ENCODE measurements at regions of chr19 and their contacts with region 1.

Region 1: GRCh38 chr19:7799640-7800355 is 30.2 kb upstream of the EVI5L start:
- DNase-seq: peak; percentile 61 to 65
- H3K4me3 ChIP-seq: peak overlapping the region; percentile 51
- H3K27ac ChIP-seq: no peak overlapping the region
- H3K4me1 ChIP-seq: peaks cover 6% of the 10 kb centered on the region; the same call in 1 of the 2 replicates
- H3K27me3 ChIP-seq: no peaks in the 10 kb centered on the region
- CTCF ChIP-seq: peak; percentile 87

Region 2: GRCh38 chr19:7373862-7374261 is 425.9 kb before region 1 on chr19:
- CTCF ChIA-PET with region 1: no interaction called
- POLR2A ChIA-PET with region 1: interaction called, 14 read pairs
- intact Hi-C with region 1: no loop called
- DNase-seq: peak in 1 of 2 experiments; percentile 58
- H3K4me3 ChIP-seq: no peak overlapping the region
- H3K27ac ChIP-seq: no peak overlapping the region
- H3K4me1 ChIP-seq: peaks cover 28% of the 10 kb centered on the region
- H3K27me3 ChIP-seq: no peaks in the 10 kb centered on the region
- CTCF ChIP-seq: no peak

Region 3: GRCh38 chr19:7460562-7460966 is 339.2 kb before region 1 on chr19:
- CTCF ChIA-PET with region 1: no interaction called
- POLR2A ChIA-PET with region 1: no interaction called
- intact Hi-C with region 1: no loop called
- DNase-seq: peak; percentile 92 to 99
- H3K4me3 ChIP-seq: peak overlapping the region; percentile 32; the same call in 1 of the 2 replicates
- H3K27ac ChIP-seq: peak overlapping the region; percentile 98
- H3K4me1 ChIP-seq: peaks cover 36% of the 10 kb centered on the region
- H3K27me3 ChIP-seq: no peaks in the 10 kb centered on the region
- CTCF ChIP-seq: no peak

Region 4: DNA sequence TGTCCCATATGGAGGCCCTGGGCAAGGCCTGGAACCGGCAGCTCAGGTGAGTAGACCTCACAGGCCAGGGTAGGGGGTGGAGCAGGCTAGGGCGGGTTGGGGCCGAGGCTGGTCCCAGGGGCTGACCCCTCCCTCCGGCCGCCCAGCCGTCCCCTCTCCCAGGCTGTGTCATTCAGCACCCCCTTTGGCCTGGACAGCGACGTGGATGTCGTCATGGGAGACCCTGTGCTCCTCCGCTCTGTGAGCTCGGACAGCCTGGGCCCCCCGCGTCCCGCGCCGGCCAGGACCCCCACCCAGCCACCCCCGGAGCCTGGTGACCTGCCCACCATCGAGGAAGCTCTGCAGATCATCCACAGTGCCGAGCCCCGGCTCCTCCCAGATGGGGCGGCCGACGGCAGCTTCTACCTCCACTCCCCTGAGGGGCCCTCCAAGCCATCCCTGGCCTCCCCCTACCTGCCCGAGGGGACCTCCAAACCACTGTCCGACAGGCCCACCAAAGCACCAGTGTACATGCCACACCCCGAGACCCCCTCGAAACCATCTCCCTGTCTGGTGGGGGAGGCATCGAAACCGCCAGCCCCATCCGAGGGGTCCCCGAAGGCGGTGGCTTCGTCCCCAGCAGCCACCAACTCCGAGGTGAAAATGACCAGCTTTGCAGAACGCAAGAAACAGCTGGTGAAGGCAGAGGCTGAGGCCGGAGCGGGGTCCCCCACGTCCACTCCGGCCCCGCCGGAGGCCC is 188.1 kb before region 1 on chr19:
- CTCF ChIA-PET with region 1: no interaction called
- POLR2A ChIA-PET with region 1: no interaction called
- intact Hi-C with region 1: no loop called
- DNase-seq: no peak
- H3K4me3 ChIP-seq: no peak overlapping the region
- H3K27ac ChIP-seq: no peak overlapping the region
- H3K4me1 ChIP-seq: no peaks in the 10 kb centered on the region
- H3K27me3 ChIP-seq: no peaks in the 10 kb centered on the region
- CTCF ChIP-seq: no peak

Region 5: DNA sequence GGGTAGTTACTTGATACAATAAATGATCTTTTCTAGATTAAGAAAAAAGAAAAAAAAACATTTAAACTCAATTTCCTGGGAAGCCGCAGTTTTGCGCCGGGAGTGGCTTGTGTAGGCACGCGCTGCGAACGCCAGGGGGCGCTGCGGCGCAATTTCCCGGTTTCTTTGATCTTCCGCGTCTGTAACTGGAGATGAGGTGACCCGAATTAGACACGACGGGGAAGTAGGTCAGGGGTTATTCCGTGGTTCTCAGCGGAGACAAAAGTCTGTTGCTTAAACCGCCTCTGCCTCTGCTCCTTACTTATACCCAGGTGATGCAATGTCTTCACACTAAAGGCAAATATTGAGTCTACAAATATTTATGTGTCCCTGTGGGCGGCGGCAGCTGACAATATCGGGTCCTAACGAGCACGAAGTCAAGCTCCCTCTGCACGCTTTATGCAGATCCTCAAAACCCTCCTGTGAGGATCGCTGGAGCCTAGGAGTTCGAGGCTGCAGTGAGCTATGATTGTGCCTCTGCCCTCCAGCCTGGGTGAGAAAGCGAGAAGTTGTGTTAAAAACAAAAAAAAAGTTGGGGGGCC is 147.6 kb before region 1 on chr19:
- CTCF ChIA-PET with region 1: interaction called, 10 read pairs
- POLR2A ChIA-PET with region 1: no interaction called
- intact Hi-C with region 1: loop called (anchors 1 kb)
- DNase-seq: peak; percentile 91 to 98
- H3K4me3 ChIP-seq: peak overlapping the region; percentile 25; the same call in 1 of the 2 replicates
- H3K27ac ChIP-seq: peak overlapping the region; percentile 73
- H3K4me1 ChIP-seq: peaks cover 26% of the 10 kb centered on the region
- H3K27me3 ChIP-seq: no peaks in the 10 kb centered on the region
- CTCF ChIP-seq: peak; percentile 99

Region 6: DNA sequence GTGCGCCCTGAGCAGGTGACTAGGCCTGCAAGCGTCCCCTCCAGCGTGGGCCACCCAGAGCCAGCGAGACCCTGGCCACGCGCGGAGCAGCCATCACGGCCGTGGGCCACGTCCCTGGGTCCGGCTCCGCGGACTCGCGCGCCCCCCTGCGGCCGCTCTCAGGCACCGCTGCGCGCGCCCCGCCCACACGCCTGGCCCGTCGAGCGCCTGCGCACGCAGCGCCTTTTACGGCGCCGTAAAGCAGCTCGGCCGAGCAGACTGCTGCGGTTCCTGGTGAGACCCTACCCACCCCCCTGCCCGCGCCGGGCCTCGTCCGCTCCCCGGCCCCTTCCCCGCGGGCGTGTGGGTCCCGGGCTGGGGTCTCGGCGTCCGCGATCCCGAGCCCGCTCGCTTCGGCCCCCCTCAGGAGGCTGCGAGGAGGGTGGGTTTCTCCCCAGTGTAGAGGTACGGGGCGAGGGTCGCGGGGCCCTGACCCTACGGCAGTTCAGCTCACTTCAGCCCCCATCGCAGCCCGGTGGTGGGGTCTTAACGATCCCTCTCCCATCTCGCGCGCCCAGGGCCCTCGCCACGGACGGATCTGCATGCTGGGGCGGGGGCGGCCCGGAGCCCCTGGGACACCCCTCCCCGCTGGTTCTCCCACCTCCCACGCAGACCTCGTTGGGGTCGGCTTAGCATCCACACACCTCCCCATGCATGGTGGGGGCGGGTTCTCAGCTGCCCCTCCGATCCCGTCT is 119.0 kb before region 1 on chr19 and contains the start of gene TRAPPC5:
- CTCF ChIA-PET with region 1: interaction called, 15 read pairs
- POLR2A ChIA-PET with region 1: no interaction called
- intact Hi-C with region 1: loop called (anchors 1 kb)
- DNase-seq: peak; percentile 65 to 82
- H3K4me3 ChIP-seq: peak within 1 kb of the TSS; percentile 91
- H3K27ac ChIP-seq: peak within 1 kb of the TSS; percentile 32; the same call in 1 of the 2 replicates
- H3K4me1 ChIP-seq: peaks cover 21% of the 10 kb centered on the region
- H3K27me3 ChIP-seq: peaks cover 24% of the 10 kb centered on the region
- CTCF ChIP-seq: peak; percentile 89
- total RNA-seq, gene TRAPPC5: 81.2 and 103 TPM in 2 replicates

Region 7: GRCh38 chr19:7852851-7853769 is 53.3 kb after region 1 on chr19:
- CTCF ChIA-PET with region 1: interaction called, 4 read pairs
- POLR2A ChIA-PET with region 1: no interaction called
- intact Hi-C with region 1: loop called (anchors 1 kb)
- DNase-seq: peak; percentile 80 to 87
- H3K4me3 ChIP-seq: peak overlapping the region; percentile 24; the same call in 1 of the 2 replicates
- H3K27ac ChIP-seq: no peak overlapping the region
- H3K4me1 ChIP-seq: peaks cover 14% of the 10 kb centered on the region
- H3K27me3 ChIP-seq: no peaks in the 10 kb centered on the region
- CTCF ChIP-seq: peak; percentile 99

Measured in PC-9 (cell line).